GM23248 (cell line): ENCODE measurements at regions of chrX and their contacts with region 1.

Region 1: GRCh38 chrX:30570505-30570904 is 7.1 kb downstream of the TASL start:
- DNase-seq: peak; percentile 38
- H3K4me3 ChIP-seq: no peak overlapping the region
- H3K27ac ChIP-seq: no peak overlapping the region
- H3K4me1 ChIP-seq: peaks cover 9% of the 10 kb centered on the region
- H3K27me3 ChIP-seq: no peaks in the 10 kb centered on the region

Region 2: DNA sequence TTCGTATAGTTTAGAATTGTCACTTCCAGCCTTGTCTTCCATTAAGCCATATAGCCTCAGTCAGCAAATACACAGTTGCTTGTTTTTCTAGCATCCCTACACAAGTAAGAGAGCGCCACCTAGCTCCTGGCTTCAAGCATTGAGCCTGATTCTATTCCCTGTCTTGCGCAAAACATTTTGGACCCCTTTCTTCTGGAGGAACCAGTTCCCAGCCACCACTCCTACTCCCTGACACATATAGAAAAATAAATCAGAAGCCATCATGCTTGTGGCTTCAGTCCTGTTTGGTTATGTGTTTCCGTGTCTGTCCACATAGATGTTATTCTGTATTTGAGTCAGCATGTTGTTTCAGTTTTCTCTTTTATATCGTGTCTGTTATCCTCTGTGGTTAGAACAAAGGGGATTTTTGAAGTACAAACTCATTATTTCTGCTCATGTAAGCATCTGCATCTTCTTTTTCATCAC is 142.6 kb after region 1 on chrX:
- in situ Hi-C with region 1: loop called (anchors 10 kb)
- DNase-seq: peak; percentile 73
- H3K4me3 ChIP-seq: no peak overlapping the region
- H3K27ac ChIP-seq: no peak overlapping the region
- H3K4me1 ChIP-seq: no peaks in the 10 kb centered on the region
- H3K27me3 ChIP-seq: no peaks in the 10 kb centered on the region